Activated CD8-positive, alpha-beta T cell treated with anti-CD3 and anti-CD28 coated beads for 36 hours (primary cell): ENCODE measurements at regions of chr1 and their contacts with region 1.

Region 1: GRCh38 chr1:183471743-183472487 is 384 bp upstream of the SMG7 start:
- DNase-seq: peak; percentile 98
- ATAC-seq: peak; percentile 70
- H3K4me3 Mint-ChIP-seq: peak overlapping the region; percentile 86
- H3K27ac Mint-ChIP-seq: peak overlapping the region; percentile 100
- H3K4me1 Mint-ChIP-seq: peaks cover 25% of the 10 kb centered on the region
- H3K27me3 Mint-ChIP-seq: no peaks in the 10 kb centered on the region
- CTCF ChIP-seq: no peak

Region 2: DNA sequence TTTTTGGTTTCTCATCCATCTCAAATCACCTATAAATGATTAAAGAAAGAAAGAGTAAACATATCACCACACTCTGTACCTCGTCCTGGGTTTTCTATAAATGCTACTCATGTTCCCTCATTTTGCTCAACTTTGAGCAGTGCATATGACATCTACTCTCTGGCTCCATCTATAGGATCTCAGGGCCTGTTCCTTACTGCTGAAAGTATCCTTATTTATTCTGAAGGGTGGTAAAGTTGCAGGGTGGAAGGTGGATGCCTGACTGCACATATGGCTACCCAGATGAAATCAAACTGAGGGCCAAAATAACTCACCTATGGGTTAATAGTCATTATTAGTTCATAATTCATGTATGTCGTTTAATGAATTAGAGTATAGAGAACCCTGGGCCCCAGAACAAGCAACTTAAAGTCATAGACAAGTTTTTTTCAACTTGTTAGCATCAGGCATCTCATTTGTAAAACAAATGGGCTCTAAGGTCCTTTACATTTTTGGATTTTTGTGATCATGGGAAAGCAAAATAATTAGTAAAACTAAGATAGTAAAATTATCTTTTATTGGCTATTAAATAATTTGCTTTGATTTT is 71.8 kb after region 1 on chr1:
- CTCF ChIA-PET with region 1: no interaction called
- POLR2A ChIA-PET with region 1: no interaction called
- intact Hi-C with region 1: loop called (anchors 10 kb)
- DNase-seq: no peak
- ATAC-seq: peak; percentile 92
- H3K4me3 Mint-ChIP-seq: no peak overlapping the region
- H3K27ac Mint-ChIP-seq: peak overlapping the region; percentile 22
- H3K4me1 Mint-ChIP-seq: no peaks in the 10 kb centered on the region
- H3K27me3 Mint-ChIP-seq: no peaks in the 10 kb centered on the region
- CTCF ChIP-seq: peak; percentile 60